A673 (cell line): ENCODE measurements at regions of chr12 and their contacts with region 1.

Region 1: GRCh38 chr12:93742110-93742934 is 65.1 kb downstream of the CRADD start:
- DNase-seq: peak; percentile 77
- H3K4me3 ChIP-seq: peak overlapping the region; percentile 59
- H3K27ac ChIP-seq: no peak overlapping the region
- H3K4me1 ChIP-seq: peaks cover 10% of the 10 kb centered on the region
- H3K27me3 ChIP-seq: no peaks in the 10 kb centered on the region
- CTCF ChIP-seq: peak; percentile 47

Region 2: GRCh38 chr12:93689076-93689834 is 53.1 kb before region 1 on chr12:
- CTCF ChIA-PET with region 1: no interaction called
- POLR2A ChIA-PET with region 1: interaction called, 14 read pairs
- intact Hi-C with region 1: no loop called
- DNase-seq: no peak
- H3K4me3 ChIP-seq: no peak overlapping the region
- H3K27ac ChIP-seq: no peak overlapping the region
- H3K4me1 ChIP-seq: peaks cover 16% of the 10 kb centered on the region
- H3K27me3 ChIP-seq: no peaks in the 10 kb centered on the region
- CTCF ChIP-seq: no peak

Region 3: GRCh38 chr12:93813972-93814821 is 71.9 kb after region 1 on chr12:
- CTCF ChIA-PET with region 1: no interaction called
- POLR2A ChIA-PET with region 1: no interaction called
- intact Hi-C with region 1: no loop called
- DNase-seq: no peak
- H3K4me3 ChIP-seq: no peak overlapping the region
- H3K27ac ChIP-seq: peak overlapping the region; percentile 49
- H3K4me1 ChIP-seq: peaks cover 18% of the 10 kb centered on the region
- H3K27me3 ChIP-seq: no peaks in the 10 kb centered on the region
- CTCF ChIP-seq: no peak